Stomach (tissue), 19 donors: ENCODE measurements at regions of chr4 and their contacts with region 1.

Region 1: GRCh38 chr4:185640811-185641675 is 105.7 kb upstream of the PDLIM3 start:
- DNase-seq: peak in 1 of 2 donors; percentile 82
- H3K4me3 ChIP-seq: no peak overlapping the region
- H3K27ac ChIP-seq: peak overlapping the region in 2 of 5 donors; percentile 1 to 63
- H3K4me1 ChIP-seq: peaks cover 0 to 25% (median 14%) of the 10 kb centered on the region in 4 donors
- H3K27me3 ChIP-seq: peaks cover 0 to 13% (median 0%) of the 10 kb centered on the region in 3 donors
- CTCF ChIP-seq: peak in 4 of 7 experiments; percentile 19 to 52 (median 30)
- EP300 ChIP-seq: no peak
- POLR2A ChIP-seq: no peak

Region 2: GRCh38 chr4:185358514-185358913 is 282.5 kb before region 1 on chr4:
- intact Hi-C with region 1: no loop called
- DNase-seq: no peak
- H3K4me3 ChIP-seq: no peak overlapping the region
- H3K27ac ChIP-seq: no peak overlapping the region
- H3K4me1 ChIP-seq: no peaks in the 10 kb centered on the region
- H3K27me3 ChIP-seq: no peaks in the 10 kb centered on the region
- CTCF ChIP-seq: no peak
- EP300 ChIP-seq: no peak
- POLR2A ChIP-seq: no peak

Region 3: GRCh38 chr4:185912779-185913178 is 271.7 kb after region 1 on chr4:
- intact Hi-C with region 1: no loop called
- DNase-seq: no peak
- H3K4me3 ChIP-seq: no peak overlapping the region
- H3K27ac ChIP-seq: no peak overlapping the region
- H3K4me1 ChIP-seq: no peaks in the 10 kb centered on the region
- H3K27me3 ChIP-seq: no peaks in the 10 kb centered on the region
- CTCF ChIP-seq: no peak
- EP300 ChIP-seq: no peak
- POLR2A ChIP-seq: no peak

Region 4: DNA sequence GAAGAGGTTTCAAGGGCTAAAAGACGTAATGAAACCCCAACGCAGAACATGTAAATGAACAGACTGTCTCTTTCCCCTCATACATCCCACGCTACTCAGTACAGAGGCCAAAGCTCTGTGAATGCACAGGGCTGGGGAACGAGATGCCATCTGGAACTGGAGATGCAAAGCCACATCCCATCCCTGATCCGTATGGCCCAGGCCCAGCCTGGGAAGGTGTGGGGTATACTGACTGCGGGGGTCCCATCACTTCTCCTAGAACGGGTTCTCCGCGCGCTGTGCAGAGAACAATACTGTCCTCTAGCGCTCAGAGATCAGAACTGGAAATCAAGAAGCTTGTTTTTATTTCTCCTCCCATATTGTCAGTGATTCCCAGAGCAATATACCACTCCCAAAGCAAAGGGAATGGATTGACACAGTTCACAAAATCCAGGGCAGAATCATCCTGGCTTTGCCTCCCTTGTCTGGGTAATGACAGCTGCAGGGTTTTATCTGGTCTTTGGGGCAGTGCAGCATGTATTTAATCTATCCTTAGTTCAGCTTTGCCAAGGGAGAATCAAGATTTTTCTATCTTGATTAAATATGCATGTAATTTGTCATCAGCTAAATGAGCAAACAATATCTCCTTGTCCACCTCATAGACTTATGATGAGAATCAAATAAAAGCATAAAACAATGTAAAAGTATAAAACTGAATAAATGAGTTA is 380.6 kb after region 1 on chr4:
- intact Hi-C with region 1: loop called (anchors 5 kb)
- DNase-seq: peak in 1 of 2 donors; percentile 77
- H3K4me3 ChIP-seq: no peak overlapping the region
- H3K27ac ChIP-seq: peak overlapping the region in 2 of 5 donors; percentile 17 to 55
- H3K4me1 ChIP-seq: peaks cover 0 to 27% (median 16%) of the 10 kb centered on the region in 4 donors
- H3K27me3 ChIP-seq: no peaks in the 10 kb centered on the region
- CTCF ChIP-seq: peak in 5 of 7 experiments; percentile 55 to 76 (median 66)
- EP300 ChIP-seq: no peak
- POLR2A ChIP-seq: no peak